K562 (cell line): ENCODE measurements at regions of chr5 and their contacts with region 1.

Region 1: DNA sequence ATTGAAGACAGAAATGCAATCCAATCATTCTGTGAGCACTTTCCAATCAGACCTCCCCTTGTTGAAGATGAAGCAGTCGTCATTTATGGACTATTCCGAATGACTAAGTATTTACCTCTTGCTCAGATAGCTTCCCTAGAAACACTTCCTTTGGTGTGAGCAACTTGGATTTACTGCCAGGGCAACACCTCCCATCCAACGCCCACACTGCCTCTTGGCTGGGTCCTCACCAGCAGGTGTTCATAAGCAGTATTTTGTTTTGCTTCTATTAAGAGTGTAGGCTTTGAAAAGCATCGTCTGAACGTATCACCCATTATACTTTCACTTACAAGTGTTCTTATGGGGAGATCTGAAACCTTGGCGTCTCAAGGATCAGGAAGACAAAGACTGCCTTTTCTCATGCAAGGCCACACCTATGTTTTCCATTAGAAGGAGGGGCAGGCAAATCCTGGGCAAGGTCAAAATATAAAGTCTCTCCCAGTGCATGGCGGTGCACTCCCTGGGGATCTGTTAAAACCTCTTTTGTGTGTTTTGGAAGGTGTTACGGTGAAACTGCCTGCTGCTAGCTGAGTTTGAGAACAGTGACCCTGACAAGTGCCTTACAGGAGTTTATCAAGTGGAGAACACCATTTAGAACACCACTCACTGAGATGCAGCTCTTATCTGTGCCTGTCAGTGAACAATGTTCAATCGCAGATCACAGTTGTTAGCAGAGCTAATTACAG is 10.6 kb upstream of the MARCHF3 start:
- DNase-seq: peak in 2 of 4 experiments; percentile 26 to 39
- ATAC-seq: peak; percentile 73
- H3K4me3 ChIP-seq: no peak overlapping the region
- H3K27ac ChIP-seq: no peak overlapping the region
- H3K4me1 ChIP-seq: peaks cover 0 to 10% of the 10 kb centered on the region in 2 experiments; a peak in 2 of 5 replicates
- H3K27me3 ChIP-seq: no peaks in the 10 kb centered on the region
- CTCF ChIP-seq: no peak
- EP300 ChIP-seq: no peak
- POLR2A ChIP-seq: no peak
- RAD21 ChIP-seq: no peak

Region 2: DNA sequence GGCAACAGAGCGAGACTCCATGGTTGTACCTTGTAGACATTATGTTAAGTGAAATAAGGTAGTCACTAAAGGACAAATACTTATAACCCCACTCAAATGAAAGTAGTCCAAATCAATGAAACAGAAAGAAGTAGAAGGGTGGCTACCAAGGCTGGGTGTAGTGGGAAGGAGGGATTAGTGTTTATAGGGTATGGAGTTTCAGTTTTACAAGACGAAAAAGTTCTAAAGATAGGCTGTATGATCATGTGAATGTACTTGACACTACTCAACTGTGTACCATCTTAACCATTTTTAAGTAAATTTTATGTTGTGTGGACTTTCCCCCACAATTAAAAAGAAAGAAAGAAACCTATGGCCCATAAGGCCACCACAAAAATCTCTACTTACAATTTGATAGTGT is 478.1 kb before region 1 on chr5:
- CTCF ChIA-PET with region 1: no interaction called
- POLR2A ChIA-PET with region 1: no interaction called
- in situ Hi-C with region 1: no loop called
- intact Hi-C with region 1: no loop called
- DNase-seq: no peak
- ATAC-seq: no peak
- H3K4me3 ChIP-seq: no peak overlapping the region
- H3K27ac ChIP-seq: no peak overlapping the region
- H3K4me1 ChIP-seq: no peaks in the 10 kb centered on the region
- H3K27me3 ChIP-seq: peaks cover 3 to 4% of the 10 kb centered on the region in 2 experiments; a peak in 2 of 5 replicates
- CTCF ChIP-seq: no peak
- EP300 ChIP-seq: no peak
- POLR2A ChIP-seq: no peak
- RAD21 ChIP-seq: no peak

Region 3: DNA sequence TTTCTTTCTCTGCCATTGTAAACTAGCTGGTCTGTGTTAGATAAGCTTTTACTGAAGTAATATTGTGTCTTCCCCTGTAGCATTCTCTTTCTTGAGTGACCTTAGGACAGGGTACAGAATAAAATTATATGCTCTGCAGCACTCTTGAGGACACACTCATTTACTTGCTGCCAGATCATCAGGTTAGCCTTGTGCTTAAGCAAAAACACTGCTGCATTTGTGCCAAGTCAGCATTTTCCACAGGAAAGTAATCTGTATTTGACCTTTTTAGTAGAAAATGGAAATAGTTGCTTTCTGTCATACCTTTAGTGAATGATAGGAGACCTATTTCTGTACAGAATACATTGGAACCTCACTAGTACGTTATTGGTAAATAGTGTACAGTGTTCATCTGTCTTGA is 209.8 kb before region 1 on chr5:
- CTCF ChIA-PET with region 1: no interaction called
- POLR2A ChIA-PET with region 1: no interaction called
- in situ Hi-C with region 1: no loop called
- intact Hi-C with region 1: no loop called
- DNase-seq: no peak
- ATAC-seq: no peak
- H3K4me3 ChIP-seq: no peak overlapping the region
- H3K27ac ChIP-seq: no peak overlapping the region
- H3K4me1 ChIP-seq: no peaks in the 10 kb centered on the region
- H3K27me3 ChIP-seq: no peaks in the 10 kb centered on the region
- CTCF ChIP-seq: no peak
- EP300 ChIP-seq: no peak
- POLR2A ChIP-seq: no peak
- RAD21 ChIP-seq: no peak

Region 4: GRCh38 chr5:126963822-126964375 is 77.1 kb before region 1 on chr5:
- CTCF ChIA-PET with region 1: no interaction called
- POLR2A ChIA-PET with region 1: no interaction called
- in situ Hi-C with region 1: no loop called
- intact Hi-C with region 1: loop called (anchors 1 kb)
- DNase-seq: no peak
- ATAC-seq: peak; percentile 71
- H3K4me3 ChIP-seq: no peak overlapping the region
- H3K27ac ChIP-seq: no peak overlapping the region; the same call in 2 of the 3 replicates
- H3K4me1 ChIP-seq: peaks cover 5 to 36% of the 10 kb centered on the region in 2 experiments; a peak in 4 of 5 replicates
- H3K27me3 ChIP-seq: no peaks in the 10 kb centered on the region
- CTCF ChIP-seq: peak in 2 of 3 experiments; percentile 5 to 32; a peak in 3 of 6 replicates
- EP300 ChIP-seq: no peak
- POLR2A ChIP-seq: no peak
- RAD21 ChIP-seq: peak in 1 of 2 experiments; percentile 51; a peak in 3 of 4 replicates